H1 (cell line): ENCODE measurements at regions of chr1 and their contacts with region 1.

Region 1: DNA sequence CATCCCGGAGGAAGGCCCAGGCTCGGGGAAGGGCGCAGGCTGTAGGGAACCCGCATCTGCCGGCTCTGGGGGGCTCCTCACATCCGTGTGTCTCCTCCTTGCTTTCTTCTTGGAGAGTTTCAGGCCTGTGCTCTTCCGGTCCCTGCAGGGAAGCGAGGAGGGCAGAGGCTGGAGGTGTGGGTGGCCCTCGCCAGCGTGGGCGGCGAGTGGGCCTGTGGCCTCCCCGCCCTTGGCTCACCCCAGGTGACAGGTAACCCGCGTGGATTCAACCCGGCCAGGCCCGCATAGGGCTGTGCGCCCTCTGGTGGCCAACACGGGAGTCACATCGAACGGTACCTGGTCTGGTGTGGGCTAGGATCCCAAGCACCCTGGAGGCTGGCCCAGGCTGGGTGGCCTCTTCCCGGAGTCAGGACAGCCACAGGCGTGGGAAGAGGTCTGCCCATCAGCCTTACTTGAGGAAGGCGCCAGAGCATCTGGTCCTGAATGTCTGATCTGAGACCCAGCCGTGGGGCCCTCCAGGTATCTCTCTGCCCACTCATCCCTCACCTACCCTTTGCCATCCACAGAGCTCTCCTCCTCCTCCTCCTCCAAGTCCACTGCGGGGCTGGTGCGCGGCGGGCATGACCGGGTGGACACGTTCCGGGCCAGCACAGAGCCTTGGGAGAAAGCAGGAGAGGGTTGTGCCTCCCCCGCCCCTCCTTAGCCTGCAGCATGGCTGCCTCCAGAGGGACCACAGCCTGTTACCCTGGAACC is 9.6 kb upstream of the TNFRSF25 start:
- DNase-seq: peak in 1 of 2 experiments; percentile 91
- H3K4me3 ChIP-seq: no peak overlapping the region
- H3K27ac ChIP-seq: no peak overlapping the region
- H3K4me1 ChIP-seq: peaks cover 0 to 22% (median 14%) of the 10 kb centered on the region in 4 experiments; a peak in 6 of 7 replicates
- H3K27me3 ChIP-seq: no peaks in the 10 kb centered on the region; a peak in 1 of 7 replicates
- CTCF ChIP-seq: peak in 2 of 3 experiments; percentile 81 to 92; a peak in 3 of 4 replicates
- EP300 ChIP-seq: no peak
- POLR2A ChIP-seq: no peak
- RAD21 ChIP-seq: peak; percentile 30 to 54; a peak in 3 of 4 replicates

Region 2: GRCh38 chr1:6445062-6445763 is 30.3 kb before region 1 on chr1:
- CTCF ChIA-PET with region 1: interaction called, 22 read pairs
- POLR2A ChIA-PET with region 1: interaction called, 123 read pairs
- DNase-seq: no peak
- H3K4me3 ChIP-seq: no peak overlapping the region
- H3K27ac ChIP-seq: no peak overlapping the region
- H3K4me1 ChIP-seq: peaks cover 3 to 29% (median 18%) of the 10 kb centered on the region in 4 experiments
- H3K27me3 ChIP-seq: peaks cover 0 to 16% (median 11%) of the 10 kb centered on the region in 4 experiments; a peak in 5 of 7 replicates
- CTCF ChIP-seq: peak; percentile 66 to 77 (median 67)
- EP300 ChIP-seq: no peak
- POLR2A ChIP-seq: no peak
- RAD21 ChIP-seq: peak; percentile 34 to 41

Region 3: DNA sequence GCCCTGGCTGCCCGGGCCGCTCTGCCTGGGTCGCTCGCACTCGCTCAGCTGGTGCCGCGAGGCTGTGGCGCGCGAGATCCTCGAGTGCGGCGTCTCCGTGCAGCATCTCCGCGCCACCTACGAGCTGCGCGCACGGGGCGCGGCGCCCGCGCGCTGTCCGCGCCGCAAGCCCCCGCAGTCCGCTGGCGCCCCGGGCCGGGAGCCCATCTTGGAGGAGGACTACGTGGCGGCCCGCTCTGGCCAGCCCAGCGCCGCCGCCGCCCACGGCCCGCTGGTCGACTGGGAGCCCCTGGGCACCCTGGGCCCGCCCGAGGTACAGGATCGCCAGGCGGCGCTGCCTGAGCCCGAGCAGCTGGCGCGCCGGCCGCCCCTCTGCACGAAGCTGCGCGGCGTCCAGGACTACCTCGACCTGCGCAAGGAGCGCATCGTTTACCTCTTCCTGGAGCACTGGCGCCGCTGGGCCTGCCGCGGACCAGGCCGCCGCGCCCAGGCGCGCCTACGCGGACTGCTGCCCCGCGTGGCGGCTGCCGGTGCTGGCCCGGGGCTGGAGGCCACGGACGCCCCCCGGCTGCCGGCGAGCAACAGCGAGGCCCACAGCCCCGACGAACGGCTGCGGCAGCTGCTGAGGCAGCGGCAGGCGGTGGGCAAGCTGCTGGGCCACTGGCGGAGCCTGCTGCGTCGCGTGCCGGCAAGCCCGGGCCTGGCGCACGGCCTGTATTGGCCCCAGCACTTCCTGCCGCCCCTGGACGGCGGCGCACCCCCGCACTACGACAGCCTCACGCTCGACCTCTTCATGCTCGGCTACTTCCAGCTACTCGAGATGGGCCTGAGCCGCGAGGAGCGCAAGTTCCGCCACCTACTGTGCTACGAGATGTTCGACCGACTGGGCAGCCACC is 20.5 kb before region 1 on chr1:
- CTCF ChIA-PET with region 1: interaction called, 37 read pairs
- POLR2A ChIA-PET with region 1: interaction called, 123 read pairs
- DNase-seq: no peak
- H3K4me3 ChIP-seq: peak overlapping the region in 1 of 4 experiments; percentile 44; a peak in 2 of 8 replicates
- H3K27ac ChIP-seq: no peak overlapping the region
- H3K4me1 ChIP-seq: peaks cover 0 to 20% (median 10%) of the 10 kb centered on the region in 4 experiments; a peak in 5 of 7 replicates
- H3K27me3 ChIP-seq: peaks cover 5 to 37% (median 21%) of the 10 kb centered on the region in 4 experiments; a peak in 6 of 7 replicates
- CTCF ChIP-seq: peak in 2 of 3 experiments; percentile 49 to 82; a peak in 3 of 4 replicates
- EP300 ChIP-seq: no peak
- POLR2A ChIP-seq: no peak
- RAD21 ChIP-seq: peak in 1 of 2 experiments; percentile 3; a peak in 1 of 4 replicates

Region 4: GRCh38 chr1:6464514-6464836 is 11.1 kb before region 1 on chr1:
- CTCF ChIA-PET with region 1: interaction called, 31 read pairs
- POLR2A ChIA-PET with region 1: interaction called, 13 read pairs
- DNase-seq: no peak
- H3K4me3 ChIP-seq: no peak overlapping the region
- H3K27ac ChIP-seq: no peak overlapping the region
- H3K4me1 ChIP-seq: peaks cover 0 to 20% (median 13%) of the 10 kb centered on the region in 4 experiments; a peak in 5 of 7 replicates
- H3K27me3 ChIP-seq: peaks cover 0 to 7% (median 4%) of the 10 kb centered on the region in 4 experiments; a peak in 3 of 7 replicates
- CTCF ChIP-seq: peak in 1 of 3 experiments; percentile 14; a peak in 1 of 4 replicates
- EP300 ChIP-seq: no peak
- POLR2A ChIP-seq: no peak
- RAD21 ChIP-seq: peak in 1 of 2 experiments; percentile 18; a peak in 1 of 4 replicates